ENCODE measurements at regions of chr10 and their contacts with region 1.

Region 1: GRCh38 chr10:72331601-72332422 is 22.9 kb downstream of the DNAJB12 start:
- DNase-seq: peak; percentile 85 to 98 (median 92)
- ATAC-seq: peak; percentile 70
- H3K4me3 ChIP-seq: peak overlapping the region; percentile 2 to 31
- H3K4me3 Mint-ChIP-seq: peak overlapping the region; percentile 77
- H3K27ac ChIP-seq: peak overlapping the region; percentile 44 to 69
- H3K27ac Mint-ChIP-seq: peak overlapping the region; percentile 99
- H3K4me1 ChIP-seq: peaks cover 94% of the 10 kb centered on the region
- H3K4me1 Mint-ChIP-seq: peaks cover 91% of the 10 kb centered on the region
- H3K27me3 ChIP-seq: no peaks in the 10 kb centered on the region
- H3K27me3 Mint-ChIP-seq: no peaks in the 10 kb centered on the region
- CTCF ChIP-seq: peak; percentile 28

Region 2: DNA sequence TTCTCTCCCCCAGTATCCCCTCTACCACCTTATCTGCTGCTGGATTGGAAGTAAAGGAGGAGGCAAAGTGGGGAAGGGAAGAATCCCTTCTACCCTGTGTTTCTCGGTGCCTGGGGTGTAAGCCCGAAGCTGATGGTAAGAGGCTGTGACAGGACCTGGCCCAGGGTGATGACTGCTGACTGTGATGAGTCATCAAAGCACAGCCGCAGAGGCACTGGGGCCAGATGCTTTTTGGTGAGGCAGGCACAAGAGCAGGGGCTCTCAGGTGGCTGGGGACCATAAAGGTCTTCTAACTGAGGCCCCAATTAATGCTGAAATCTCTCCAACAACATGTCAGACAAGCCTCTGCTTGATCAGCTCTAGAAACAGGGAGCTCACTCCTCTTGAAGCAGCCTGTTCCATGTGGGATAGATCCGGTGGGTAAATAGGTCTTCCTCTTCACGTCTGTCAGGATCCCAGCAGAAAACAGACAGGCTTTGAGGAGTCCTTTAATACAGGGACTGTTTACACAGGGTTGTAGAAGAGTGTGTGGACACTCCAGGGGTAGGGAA is 1357.4 kb before region 1 on chr10:
- CTCF ChIA-PET with region 1: no interaction called
- POLR2A ChIA-PET with region 1: no interaction called
- intact Hi-C with region 1: no loop called
- DNase-seq: no peak
- ATAC-seq: no peak
- H3K4me3 ChIP-seq: no peak overlapping the region
- H3K4me3 Mint-ChIP-seq: no peak overlapping the region
- H3K27ac ChIP-seq: no peak overlapping the region
- H3K27ac Mint-ChIP-seq: no peak overlapping the region
- H3K4me1 ChIP-seq: no peaks in the 10 kb centered on the region
- H3K4me1 Mint-ChIP-seq: no peaks in the 10 kb centered on the region
- H3K27me3 ChIP-seq: no peaks in the 10 kb centered on the region
- H3K27me3 Mint-ChIP-seq: peaks cover 19% of the 10 kb centered on the region
- CTCF ChIP-seq: no peak

Region 3: GRCh38 chr10:72013202-72013945 is 318.4 kb before region 1 on chr10:
- CTCF ChIA-PET with region 1: no interaction called
- POLR2A ChIA-PET with region 1: no interaction called
- intact Hi-C with region 1: no loop called
- DNase-seq: no peak
- ATAC-seq: no peak
- H3K4me3 ChIP-seq: no peak overlapping the region
- H3K4me3 Mint-ChIP-seq: no peak overlapping the region
- H3K27ac ChIP-seq: no peak overlapping the region
- H3K27ac Mint-ChIP-seq: no peak overlapping the region
- H3K4me1 ChIP-seq: no peaks in the 10 kb centered on the region
- H3K4me1 Mint-ChIP-seq: no peaks in the 10 kb centered on the region
- H3K27me3 ChIP-seq: no peaks in the 10 kb centered on the region
- H3K27me3 Mint-ChIP-seq: no peaks in the 10 kb centered on the region
- CTCF ChIP-seq: no peak

Region 4: DNA sequence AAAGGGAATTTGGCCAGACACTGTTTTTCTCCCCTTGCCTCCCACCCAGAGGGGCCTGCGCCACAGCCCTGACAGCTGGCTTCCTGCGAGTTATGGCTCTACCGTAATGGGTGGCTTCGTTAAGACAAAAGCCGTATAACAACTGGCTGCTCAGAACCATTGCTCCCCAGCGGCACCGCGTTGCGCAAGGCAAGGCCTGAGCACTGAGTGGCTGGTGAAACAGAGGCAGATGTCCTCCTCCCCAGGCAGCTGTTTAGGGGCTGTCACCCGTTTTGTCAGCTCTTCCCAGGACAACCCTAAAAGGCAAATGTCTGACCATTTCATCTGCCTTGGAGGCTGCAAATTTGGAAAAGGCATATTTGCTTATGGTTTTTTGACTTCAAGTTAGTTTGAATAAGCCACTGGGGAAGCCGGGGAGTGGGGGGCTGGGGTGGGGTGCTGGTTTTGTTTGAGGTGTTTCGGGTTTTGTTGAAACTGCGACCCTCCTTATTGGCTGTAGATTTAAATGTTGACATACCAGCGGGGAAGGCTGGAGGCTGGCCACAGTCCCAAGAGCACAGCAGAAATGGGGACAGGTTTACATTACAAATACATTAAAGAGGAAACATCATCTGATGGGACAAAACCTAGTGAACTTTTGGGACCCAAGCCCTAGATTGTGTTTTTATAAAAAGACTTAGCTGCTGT is 242.8 kb before region 1 on chr10:
- CTCF ChIA-PET with region 1: interaction called, 4 read pairs
- POLR2A ChIA-PET with region 1: interaction called, 9 read pairs
- intact Hi-C with region 1: loop called (anchors 2 to 5 kb)
- DNase-seq: peak in 8 of 9 experiments; percentile 37 to 84 (median 71)
- ATAC-seq: peak; percentile 56
- H3K4me3 ChIP-seq: peak overlapping the region; percentile 96 to 98
- H3K4me3 Mint-ChIP-seq: peak overlapping the region; percentile 100
- H3K27ac ChIP-seq: peak overlapping the region; percentile 96 to 98
- H3K27ac Mint-ChIP-seq: peak overlapping the region; percentile 99
- H3K4me1 ChIP-seq: peaks cover 45% of the 10 kb centered on the region
- H3K4me1 Mint-ChIP-seq: peaks cover 49% of the 10 kb centered on the region
- H3K27me3 ChIP-seq: no peaks in the 10 kb centered on the region
- H3K27me3 Mint-ChIP-seq: no peaks in the 10 kb centered on the region
- CTCF ChIP-seq: no peak

Region 5: DNA sequence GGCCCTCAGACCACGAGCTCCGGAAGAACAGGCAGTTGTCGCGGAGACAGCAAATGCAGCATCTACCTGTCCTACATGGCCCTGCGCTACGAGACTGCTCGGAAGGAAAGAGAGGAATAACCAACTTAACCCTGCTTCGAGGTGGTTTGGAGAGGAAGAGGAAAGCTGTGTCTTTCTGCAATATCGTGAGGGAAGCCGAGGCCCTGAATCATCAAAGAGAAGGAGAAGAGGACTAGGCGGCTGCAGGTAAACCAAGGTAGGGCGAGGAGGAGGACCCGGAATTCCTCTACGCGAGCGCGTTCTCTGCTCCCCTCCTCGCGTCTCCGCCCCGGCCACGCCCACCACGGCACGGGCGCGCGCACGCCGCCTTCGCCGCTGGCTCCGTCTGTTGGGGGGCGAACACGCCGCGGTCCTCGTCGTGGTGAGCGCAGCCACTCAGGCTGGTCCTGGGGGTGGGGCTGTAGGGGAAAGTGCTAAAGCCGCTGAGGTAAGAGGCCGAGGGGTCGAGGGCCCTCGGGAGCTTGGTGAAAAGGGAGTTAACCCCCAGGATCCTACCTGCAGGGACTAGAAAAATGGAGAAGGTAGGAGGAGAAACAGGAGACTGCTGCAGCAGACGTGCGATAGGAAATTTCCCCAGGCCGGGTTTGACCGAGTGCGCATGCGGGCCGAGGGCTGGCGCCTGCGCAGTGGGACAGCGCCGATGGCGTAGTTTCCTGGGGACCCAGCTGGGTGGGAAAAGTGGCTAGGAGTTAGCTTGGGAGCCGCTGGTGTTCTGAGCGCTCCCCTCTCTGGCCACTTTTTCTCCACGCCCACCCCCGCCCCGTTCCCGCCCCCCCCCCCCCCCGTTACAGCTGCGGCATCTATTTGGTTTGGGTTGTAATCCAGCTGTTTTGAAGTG is 115.9 kb before region 1 on chr10 and contains the starts of genes ANAPC16 and ASCC1:
- CTCF ChIA-PET with region 1: interaction called, 7 read pairs
- POLR2A ChIA-PET with region 1: interaction called, 7 read pairs
- intact Hi-C with region 1: loop called in 1 of 2 experiments (anchors 1 kb)
- DNase-seq: peak; percentile 90 to 98 (median 95)
- ATAC-seq: peak; percentile 83
- H3K4me3 ChIP-seq: peak within 1 kb of the TSS; percentile 78 to 82
- H3K4me3 Mint-ChIP-seq: peak within 1 kb of the TSS; percentile 100
- H3K27ac ChIP-seq: peak within 1 kb of the TSS; percentile 61 to 93
- H3K27ac Mint-ChIP-seq: peak within 1 kb of the TSS; percentile 100
- H3K4me1 ChIP-seq: peaks cover 58% of the 10 kb centered on the region
- H3K4me1 Mint-ChIP-seq: peaks cover 54% of the 10 kb centered on the region
- H3K27me3 ChIP-seq: no peaks in the 10 kb centered on the region
- H3K27me3 Mint-ChIP-seq: no peaks in the 10 kb centered on the region
- CTCF ChIP-seq: no peak
- total RNA-seq, gene ANAPC16: 46.6 to 48.0 TPM
- total RNA-seq, gene ASCC1: 16.5 to 19.1 TPM

Region 6: GRCh38 chr10:72254813-72255568 is 76.8 kb before region 1 on chr10:
- CTCF ChIA-PET with region 1: interaction called, 30 read pairs
- POLR2A ChIA-PET with region 1: interaction called, 3 read pairs
- intact Hi-C with region 1: loop called in 1 of 2 experiments (anchors 1 kb)
- DNase-seq: peak in 7 of 9 experiments; percentile 23 to 66 (median 48)
- ATAC-seq: peak; percentile 64
- H3K4me3 ChIP-seq: peak overlapping the region; percentile 6 to 46
- H3K4me3 Mint-ChIP-seq: peak overlapping the region; percentile 72
- H3K27ac ChIP-seq: peak overlapping the region in 1 of 2 experiments; percentile 14
- H3K27ac Mint-ChIP-seq: peak overlapping the region; percentile 92
- H3K4me1 ChIP-seq: peaks cover 83% of the 10 kb centered on the region
- H3K4me1 Mint-ChIP-seq: peaks cover 71% of the 10 kb centered on the region
- H3K27me3 ChIP-seq: no peaks in the 10 kb centered on the region
- H3K27me3 Mint-ChIP-seq: no peaks in the 10 kb centered on the region
- CTCF ChIP-seq: no peak

Region 7: GRCh38 chr10:72297968-72298773 is 33.6 kb before region 1 on chr10:
- CTCF ChIA-PET with region 1: interaction called, 17 read pairs
- POLR2A ChIA-PET with region 1: interaction called, 7 read pairs
- intact Hi-C with region 1: loop called (anchors 1 kb)
- DNase-seq: peak; percentile 68 to 96 (median 83)
- ATAC-seq: peak; percentile 58
- H3K4me3 ChIP-seq: peak overlapping the region; percentile 53 to 57
- H3K4me3 Mint-ChIP-seq: peak overlapping the region; percentile 72
- H3K27ac ChIP-seq: peak overlapping the region; percentile 70 to 96
- H3K27ac Mint-ChIP-seq: peak overlapping the region; percentile 80
- H3K4me1 ChIP-seq: peaks cover 38% of the 10 kb centered on the region
- H3K4me1 Mint-ChIP-seq: peaks cover 41% of the 10 kb centered on the region
- H3K27me3 ChIP-seq: no peaks in the 10 kb centered on the region
- H3K27me3 Mint-ChIP-seq: no peaks in the 10 kb centered on the region
- CTCF ChIP-seq: no peak

Measured in CD8-positive, alpha-beta T cell (primary cell).